CD8-positive, alpha-beta T cell (primary cell): ENCODE measurements at regions of chr13 and their contacts with region 1.

Region 1: GRCh38 chr13:93698016-93698613 is 471.5 kb downstream of the GPC6 start:
- DNase-seq: no peak
- ATAC-seq: no peak
- H3K4me3 ChIP-seq: no peak overlapping the region
- H3K4me3 Mint-ChIP-seq: no peak overlapping the region
- H3K27ac ChIP-seq: no peak overlapping the region
- H3K27ac Mint-ChIP-seq: no peak overlapping the region
- H3K4me1 ChIP-seq: no peaks in the 10 kb centered on the region
- H3K4me1 Mint-ChIP-seq: no peaks in the 10 kb centered on the region
- H3K27me3 ChIP-seq: no peaks in the 10 kb centered on the region
- H3K27me3 Mint-ChIP-seq: no peaks in the 10 kb centered on the region
- CTCF ChIP-seq: no peak

Region 2: DNA sequence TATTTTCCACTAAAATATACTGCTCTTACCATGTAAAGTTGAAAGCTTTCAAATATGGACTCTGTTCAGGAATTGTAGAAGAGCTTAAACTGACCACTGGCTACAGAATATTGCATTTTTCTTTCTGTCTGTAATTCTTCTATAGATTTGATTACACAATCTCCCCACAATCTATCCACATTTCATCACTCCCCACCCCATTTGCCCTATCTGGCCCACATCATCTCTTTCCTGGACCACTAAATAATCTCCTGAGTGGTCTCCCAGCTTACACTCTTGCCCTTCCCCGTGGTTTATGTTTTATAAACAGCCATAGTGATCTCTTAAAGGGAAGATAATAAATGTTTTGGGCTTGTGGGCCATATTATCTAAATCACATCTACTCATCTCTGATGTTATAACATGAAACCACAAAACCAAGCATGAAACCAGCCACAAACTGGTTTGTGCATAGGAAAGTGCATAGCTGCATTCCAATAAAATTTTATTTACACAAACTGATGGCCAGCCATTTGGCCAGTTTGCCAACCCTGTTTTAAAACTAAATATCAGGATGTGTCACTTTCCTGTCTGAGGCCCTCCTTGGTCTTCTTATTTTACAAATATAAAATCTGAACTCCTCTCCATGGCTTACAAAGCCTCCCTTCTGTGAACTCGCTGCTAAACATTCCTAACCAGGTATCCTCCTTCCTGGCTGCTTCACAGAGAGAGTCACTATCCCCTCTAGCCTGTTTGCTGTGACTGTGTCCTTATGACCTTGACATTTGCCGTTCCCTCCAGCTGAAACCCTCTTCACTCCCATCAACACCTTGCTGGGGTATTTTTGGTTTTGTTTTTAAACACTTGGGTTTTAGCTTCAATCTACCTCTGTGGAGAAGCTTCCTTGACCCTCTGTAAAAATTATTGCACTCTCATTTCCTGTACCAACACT is 29.4 kb after region 1 on chr13:
- CTCF ChIA-PET with region 1: no interaction called
- POLR2A ChIA-PET with region 1: no interaction called
- intact Hi-C with region 1: loop called in 1 of 2 experiments (anchors 1 kb)
- DNase-seq: no peak
- ATAC-seq: no peak
- H3K4me3 ChIP-seq: no peak overlapping the region
- H3K4me3 Mint-ChIP-seq: no peak overlapping the region
- H3K27ac ChIP-seq: no peak overlapping the region
- H3K27ac Mint-ChIP-seq: no peak overlapping the region
- H3K4me1 ChIP-seq: no peaks in the 10 kb centered on the region
- H3K4me1 Mint-ChIP-seq: no peaks in the 10 kb centered on the region
- H3K27me3 ChIP-seq: no peaks in the 10 kb centered on the region
- H3K27me3 Mint-ChIP-seq: no peaks in the 10 kb centered on the region
- CTCF ChIP-seq: no peak